ENCODE measurements at regions of chr5 and their contacts with region 1.

Region 1: DNA sequence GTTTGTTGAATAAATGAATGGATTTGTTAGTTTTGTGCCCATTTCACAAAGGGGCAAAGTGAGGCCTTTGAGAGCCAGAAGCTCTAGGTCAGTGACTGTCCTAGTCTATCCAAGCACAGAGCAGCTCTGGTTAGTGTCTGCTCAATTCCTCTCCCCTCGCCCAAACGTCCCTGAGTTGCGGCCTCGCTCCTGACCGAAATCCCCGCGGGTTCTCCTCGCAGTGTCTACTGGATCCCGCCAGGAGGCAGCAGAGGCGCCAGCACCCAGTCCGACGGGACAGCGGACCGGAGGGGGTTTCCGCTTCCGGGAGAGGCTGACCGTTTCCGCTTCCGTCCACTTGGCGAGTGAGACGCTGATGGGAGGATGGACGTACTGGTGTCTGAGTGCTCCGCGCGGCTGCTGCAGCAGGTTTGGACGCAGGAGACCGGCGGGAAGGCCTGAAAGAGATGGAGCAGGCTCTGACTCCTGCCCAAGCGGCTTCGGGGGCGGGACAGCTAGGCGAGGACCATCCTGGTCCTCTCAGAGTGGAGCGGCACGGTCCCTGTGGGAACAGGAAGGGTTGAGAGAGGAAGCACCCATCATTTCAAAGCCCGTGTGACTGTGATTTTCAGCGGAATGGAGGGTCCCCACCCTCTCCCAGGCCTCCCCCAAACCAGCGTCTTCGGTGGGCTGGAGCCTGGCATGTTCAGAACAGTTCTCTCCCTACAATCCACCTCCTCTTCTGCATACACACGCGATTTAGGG is at the start of gene RARS1:
- DNase-seq: peak; percentile 92
- H3K4me3 ChIP-seq: peak within 1 kb of the TSS; percentile 99
- H3K27ac ChIP-seq: peak within 1 kb of the TSS; percentile 48
- H3K4me1 ChIP-seq: peaks cover 7% of the 10 kb centered on the region
- CTCF ChIP-seq: peak; percentile 88
- total RNA-seq, gene RARS1: 54.4 and 62.1 TPM in 2 replicates

Region 2: GRCh38 chr5:168268949-168269943 is 217.1 kb before region 1 on chr5:
- CTCF ChIA-PET with region 1: no interaction called
- POLR2A ChIA-PET with region 1: no interaction called
- intact Hi-C with region 1: loop called (anchors 2 kb)
- DNase-seq: peak; percentile 69
- H3K4me3 ChIP-seq: no peak overlapping the region
- H3K27ac ChIP-seq: no peak overlapping the region
- H3K4me1 ChIP-seq: no peaks in the 10 kb centered on the region
- CTCF ChIP-seq: peak; percentile 85

Region 3: GRCh38 chr5:168301593-168302388 is 184.5 kb before region 1 on chr5:
- CTCF ChIA-PET with region 1: no interaction called
- POLR2A ChIA-PET with region 1: no interaction called
- intact Hi-C with region 1: no loop called
- DNase-seq: no peak
- H3K4me3 ChIP-seq: no peak overlapping the region
- H3K27ac ChIP-seq: no peak overlapping the region
- H3K4me1 ChIP-seq: no peaks in the 10 kb centered on the region
- CTCF ChIP-seq: no peak

Region 4: GRCh38 chr5:168579488-168580226 is 93.3 kb after region 1 on chr5:
- CTCF ChIA-PET with region 1: no interaction called
- POLR2A ChIA-PET with region 1: interaction called, 4 read pairs
- intact Hi-C with region 1: loop called (anchors 2 kb)
- DNase-seq: peak; percentile 97
- H3K4me3 ChIP-seq: peak overlapping the region; percentile 98
- H3K27ac ChIP-seq: peak overlapping the region; percentile 70
- H3K4me1 ChIP-seq: peaks cover 26% of the 10 kb centered on the region
- CTCF ChIP-seq: no peak